Activated CD4-positive, alpha-beta T cell treated with anti-CD3 and anti-CD28 coated beads, Interleukin-2, amount 10 ng/mL, durations not matched to agents 24 days and 14 days (primary cell): ENCODE measurements at regions of chr13 and their contacts with region 1.

Region 1: GRCh38 chr13:48220981-48221685 is 11.9 kb upstream of the ITM2B start:
- DNase-seq: peak; percentile 73
- H3K4me3 Mint-ChIP-seq: peak overlapping the region; percentile 69
- H3K27ac Mint-ChIP-seq: peak overlapping the region; percentile 78
- H3K4me1 Mint-ChIP-seq: peaks cover 35% of the 10 kb centered on the region
- H3K27me3 Mint-ChIP-seq: peaks cover 15% of the 10 kb centered on the region

Region 2: GRCh38 chr13:48155848-48156247 is 65.3 kb before region 1 on chr13:
- intact Hi-C with region 1: loop called (anchors 2 kb)
- DNase-seq: peak; percentile 80
- H3K4me3 Mint-ChIP-seq: peak overlapping the region; percentile 44
- H3K27ac Mint-ChIP-seq: peak overlapping the region; percentile 87
- H3K4me1 Mint-ChIP-seq: peaks cover 59% of the 10 kb centered on the region
- H3K27me3 Mint-ChIP-seq: no peaks in the 10 kb centered on the region

Region 3: DNA sequence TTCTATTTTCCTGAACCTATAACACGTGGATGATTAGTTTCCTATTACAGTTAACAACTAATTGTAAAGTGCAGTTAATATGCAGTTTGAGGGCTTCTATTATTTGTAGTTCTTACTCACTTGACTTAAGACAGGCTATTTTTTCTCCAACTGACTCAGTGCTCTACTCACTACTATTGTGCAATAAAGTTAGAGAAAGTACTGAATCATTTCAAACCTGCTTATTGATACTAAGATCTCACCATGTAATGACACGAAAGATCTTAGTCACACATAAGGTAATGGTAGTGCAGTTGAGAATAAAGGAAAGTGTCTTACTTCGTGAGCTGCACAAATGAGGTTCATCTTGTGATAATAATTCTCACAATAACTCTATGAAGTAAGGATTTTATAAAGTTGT is 11.0 kb before region 1 on chr13:
- intact Hi-C with region 1: loop called (anchors 1 kb)
- DNase-seq: no peak
- H3K4me3 Mint-ChIP-seq: no peak overlapping the region
- H3K27ac Mint-ChIP-seq: no peak overlapping the region
- H3K4me1 Mint-ChIP-seq: peaks cover 7% of the 10 kb centered on the region
- H3K27me3 Mint-ChIP-seq: peaks cover 34% of the 10 kb centered on the region

Region 4: GRCh38 chr13:48303359-48304142 is 82.4 kb after region 1 on chr13 and contains the start of gene RB1:
- intact Hi-C with region 1: no loop called
- DNase-seq: peak; percentile 97
- H3K4me3 Mint-ChIP-seq: peak within 1 kb of the TSS; percentile 87
- H3K27ac Mint-ChIP-seq: peak within 1 kb of the TSS; percentile 98
- H3K4me1 Mint-ChIP-seq: peaks cover 21% of the 10 kb centered on the region
- H3K27me3 Mint-ChIP-seq: no peaks in the 10 kb centered on the region
- total RNA-seq, gene RB1: 27.3 and 29.0 TPM in 2 replicates